ENCODE measurements at regions of chr3 and their contacts with region 1.

Region 1: GRCh38 chr3:119891944-119892721 is 110.2 kb downstream of the NR1I2 start:
- DNase-seq: no peak
- ATAC-seq: peak; percentile 81 to 84

Region 2: GRCh38 chr3:119819806-119820205 is 72.3 kb before region 1 on chr3:
- intact Hi-C with region 1: loop called in 1 of 2 experiments (anchors 2 kb)
- DNase-seq: no peak
- ATAC-seq: no peak

Region 3: GRCh38 chr3:119841803-119842477 is 50.2 kb before region 1 on chr3:
- intact Hi-C with region 1: no loop called
- DNase-seq: no peak
- ATAC-seq: peak in 1 of 2 donors; percentile 24

Region 4: DNA sequence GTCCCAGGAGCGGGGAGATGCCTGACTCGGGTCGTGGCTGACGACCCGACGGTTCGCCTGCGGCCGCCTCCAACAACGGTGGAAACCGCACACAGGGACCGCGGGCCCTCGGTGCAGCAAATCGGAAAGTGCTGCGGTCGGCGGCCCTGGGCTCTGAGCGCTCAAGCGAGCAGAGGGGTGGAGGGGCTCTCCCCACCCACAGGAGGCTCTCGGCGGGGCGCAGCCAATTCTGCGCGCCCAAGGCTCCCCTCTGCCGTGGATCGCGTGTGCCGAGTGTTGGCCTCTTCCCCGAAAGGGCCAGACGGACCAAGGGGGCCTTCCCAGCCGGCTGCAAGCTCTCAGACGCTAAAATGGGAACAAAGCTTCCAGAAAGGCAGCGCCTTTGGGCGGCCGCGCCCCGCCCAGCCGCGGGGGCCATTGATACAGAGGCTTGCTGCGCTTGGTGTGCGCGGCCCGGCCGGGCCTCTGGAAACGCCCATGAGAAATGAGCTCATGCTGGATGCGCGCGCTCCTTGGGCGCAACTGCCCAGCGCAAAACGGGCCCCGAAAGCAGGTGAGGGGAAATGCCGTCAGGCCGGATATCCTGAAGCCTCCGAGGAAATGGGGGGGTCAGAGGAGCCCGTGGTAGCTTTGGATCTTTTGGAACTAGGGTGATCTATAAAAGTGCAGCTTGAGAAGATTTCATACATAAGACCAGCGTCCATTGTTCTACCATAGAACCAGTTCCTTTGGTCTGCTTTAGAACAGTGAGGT is 203.3 kb after region 1 on chr3:
- intact Hi-C with region 1: loop called (anchors 5 to 10 kb)
- DNase-seq: peak; percentile 93
- ATAC-seq: peak; percentile 63 to 77

Region 5: GRCh38 chr3:120182724-120183524 is 290.8 kb after region 1 on chr3:
- intact Hi-C with region 1: loop called (anchors 5 kb)
- DNase-seq: no peak
- ATAC-seq: peak; percentile 44 to 53

Region 6: GRCh38 chr3:120198305-120198878 is 306.3 kb after region 1 on chr3:
- intact Hi-C with region 1: loop called in 1 of 2 experiments (anchors 5 kb)
- DNase-seq: no peak
- ATAC-seq: peak; percentile 22

Measured in left cardiac atrium (tissue), 4 donors.